CD4-positive, alpha-beta T cell (primary cell): ENCODE measurements at regions of chr5 and their contacts with region 1.

Region 1: DNA sequence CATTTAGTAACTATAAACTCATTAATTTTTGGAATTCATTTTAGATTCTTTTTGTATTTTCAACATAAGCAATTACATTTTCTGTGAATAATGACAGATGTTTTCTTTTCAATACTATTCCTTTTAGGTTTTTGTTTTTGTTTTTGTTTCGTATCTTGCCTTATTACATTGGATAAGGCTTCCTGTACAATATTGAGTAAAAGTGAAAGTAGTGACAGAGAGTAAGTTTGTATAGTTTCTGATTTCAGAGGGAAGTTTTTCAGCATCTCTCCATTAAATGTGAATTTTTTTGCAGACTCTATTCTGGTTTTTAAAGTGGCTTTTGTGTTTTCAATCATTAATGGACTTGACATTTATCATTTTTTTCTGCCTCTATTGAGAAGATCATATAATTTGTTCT is 12.8 kb upstream of the CAMK4 start:
- DNase-seq: no peak
- ATAC-seq: no peak
- H3K4me3 ChIP-seq: no peak overlapping the region
- H3K4me3 Mint-ChIP-seq: peak overlapping the region; percentile 13
- H3K27ac ChIP-seq: no peak overlapping the region
- H3K27ac Mint-ChIP-seq: no peak overlapping the region
- H3K4me1 ChIP-seq: peaks cover 3% of the 10 kb centered on the region
- H3K4me1 Mint-ChIP-seq: peaks cover 12% of the 10 kb centered on the region
- H3K27me3 ChIP-seq: no peaks in the 10 kb centered on the region
- H3K27me3 Mint-ChIP-seq: no peaks in the 10 kb centered on the region
- CTCF ChIP-seq: no peak

Region 2: GRCh38 chr5:111143910-111144309 is 67.4 kb before region 1 on chr5:
- CTCF ChIA-PET with region 1: no interaction called
- POLR2A ChIA-PET with region 1: no interaction called
- intact Hi-C with region 1: no loop called
- DNase-seq: no peak
- ATAC-seq: no peak
- H3K4me3 ChIP-seq: no peak overlapping the region
- H3K4me3 Mint-ChIP-seq: no peak overlapping the region
- H3K27ac ChIP-seq: no peak overlapping the region
- H3K27ac Mint-ChIP-seq: no peak overlapping the region
- H3K4me1 ChIP-seq: no peaks in the 10 kb centered on the region
- H3K4me1 Mint-ChIP-seq: no peaks in the 10 kb centered on the region
- H3K27me3 ChIP-seq: no peaks in the 10 kb centered on the region
- H3K27me3 Mint-ChIP-seq: no peaks in the 10 kb centered on the region
- CTCF ChIP-seq: no peak

Region 3: GRCh38 chr5:111169269-111169668 is 42.1 kb before region 1 on chr5:
- CTCF ChIA-PET with region 1: no interaction called
- POLR2A ChIA-PET with region 1: no interaction called
- intact Hi-C with region 1: loop called in 1 of 2 experiments (anchors 5 kb)
- DNase-seq: no peak
- ATAC-seq: no peak
- H3K4me3 ChIP-seq: no peak overlapping the region
- H3K4me3 Mint-ChIP-seq: no peak overlapping the region
- H3K27ac ChIP-seq: no peak overlapping the region
- H3K27ac Mint-ChIP-seq: no peak overlapping the region
- H3K4me1 ChIP-seq: no peaks in the 10 kb centered on the region
- H3K4me1 Mint-ChIP-seq: peaks cover 19% of the 10 kb centered on the region
- H3K27me3 ChIP-seq: no peaks in the 10 kb centered on the region
- H3K27me3 Mint-ChIP-seq: no peaks in the 10 kb centered on the region
- CTCF ChIP-seq: no peak